AG04449 (cell line): ENCODE measurements at regions of chr10 and their contacts with region 1.

Region 1: DNA sequence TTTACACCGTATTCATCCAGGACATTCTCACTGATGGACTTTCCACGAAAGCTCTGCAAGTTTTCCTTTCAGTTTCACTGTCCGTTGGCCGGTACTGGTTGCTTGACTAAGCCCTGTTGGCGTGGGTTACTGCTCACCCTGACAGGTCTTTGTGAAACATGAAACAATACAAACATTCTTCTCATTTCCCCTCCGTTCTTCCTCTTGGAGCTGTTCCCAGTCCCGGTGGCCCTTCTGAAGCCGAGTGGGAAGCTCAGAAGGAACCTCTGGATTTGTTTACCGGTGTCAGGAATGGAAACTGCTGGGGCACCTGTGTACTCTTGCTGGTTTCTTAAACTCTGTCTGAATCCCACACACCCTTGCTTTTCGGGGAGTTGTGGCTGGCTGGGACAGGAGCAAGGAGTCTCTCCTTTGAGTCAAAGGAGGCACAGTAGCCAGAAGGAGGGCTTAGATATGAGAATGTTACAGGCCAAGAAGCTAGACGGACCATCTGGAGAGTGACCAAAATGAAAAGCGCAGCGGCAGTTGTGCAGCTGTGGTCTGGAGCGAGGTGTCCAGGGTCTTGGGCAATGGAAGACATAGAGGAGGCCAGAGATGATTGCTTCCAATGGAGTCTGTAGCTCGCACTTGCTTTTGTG is 45.7 kb downstream of the LYZL2 start:
- DNase-seq: no peak
- H3K4me3 ChIP-seq: peak overlapping the region; percentile 40
- CTCF ChIP-seq: no peak

Region 2: GRCh38 chr10:30349967-30350735 is 233.7 kb before region 1 on chr10:
- CTCF ChIA-PET with region 1: no interaction called
- POLR2A ChIA-PET with region 1: no interaction called
- DNase-seq: no peak
- H3K4me3 ChIP-seq: no peak overlapping the region
- CTCF ChIP-seq: no peak

Region 3: DNA sequence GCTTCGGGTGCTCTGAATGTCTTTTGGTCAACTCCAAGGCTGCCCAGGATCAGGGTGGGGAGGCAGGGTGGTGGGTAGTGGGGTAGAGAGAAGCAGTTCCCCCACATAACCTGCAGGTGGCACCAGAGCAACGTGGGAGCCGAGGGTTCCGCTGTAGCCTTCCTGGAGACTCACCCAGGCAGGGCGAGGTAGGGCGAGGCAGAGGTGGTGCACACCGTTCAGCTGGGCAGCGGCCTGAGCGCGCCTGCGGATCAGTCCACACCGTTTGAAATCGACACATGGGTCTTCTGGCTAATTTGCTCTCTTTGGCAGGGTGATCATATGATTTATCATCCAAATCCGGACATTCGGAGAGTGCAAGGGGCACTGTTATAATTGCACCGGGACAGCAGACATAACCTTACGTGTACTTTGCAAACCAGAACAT is 191.3 kb before region 1 on chr10:
- CTCF ChIA-PET with region 1: interaction called, 222 read pairs
- POLR2A ChIA-PET with region 1: interaction called, 3 read pairs
- DNase-seq: no peak
- H3K4me3 ChIP-seq: no peak overlapping the region
- CTCF ChIP-seq: peak; percentile 95

Region 4: GRCh38 chr10:30413996-30414576 is 169.8 kb before region 1 on chr10:
- CTCF ChIA-PET with region 1: interaction called, 20 read pairs
- POLR2A ChIA-PET with region 1: no interaction called
- DNase-seq: no peak
- H3K4me3 ChIP-seq: no peak overlapping the region
- CTCF ChIP-seq: peak; percentile 76

Region 5: GRCh38 chr10:30437031-30437841 is 146.7 kb before region 1 on chr10:
- CTCF ChIA-PET with region 1: no interaction called
- POLR2A ChIA-PET with region 1: no interaction called
- DNase-seq: no peak
- H3K4me3 ChIP-seq: peak overlapping the region; percentile 86
- CTCF ChIP-seq: no peak

Region 6: DNA sequence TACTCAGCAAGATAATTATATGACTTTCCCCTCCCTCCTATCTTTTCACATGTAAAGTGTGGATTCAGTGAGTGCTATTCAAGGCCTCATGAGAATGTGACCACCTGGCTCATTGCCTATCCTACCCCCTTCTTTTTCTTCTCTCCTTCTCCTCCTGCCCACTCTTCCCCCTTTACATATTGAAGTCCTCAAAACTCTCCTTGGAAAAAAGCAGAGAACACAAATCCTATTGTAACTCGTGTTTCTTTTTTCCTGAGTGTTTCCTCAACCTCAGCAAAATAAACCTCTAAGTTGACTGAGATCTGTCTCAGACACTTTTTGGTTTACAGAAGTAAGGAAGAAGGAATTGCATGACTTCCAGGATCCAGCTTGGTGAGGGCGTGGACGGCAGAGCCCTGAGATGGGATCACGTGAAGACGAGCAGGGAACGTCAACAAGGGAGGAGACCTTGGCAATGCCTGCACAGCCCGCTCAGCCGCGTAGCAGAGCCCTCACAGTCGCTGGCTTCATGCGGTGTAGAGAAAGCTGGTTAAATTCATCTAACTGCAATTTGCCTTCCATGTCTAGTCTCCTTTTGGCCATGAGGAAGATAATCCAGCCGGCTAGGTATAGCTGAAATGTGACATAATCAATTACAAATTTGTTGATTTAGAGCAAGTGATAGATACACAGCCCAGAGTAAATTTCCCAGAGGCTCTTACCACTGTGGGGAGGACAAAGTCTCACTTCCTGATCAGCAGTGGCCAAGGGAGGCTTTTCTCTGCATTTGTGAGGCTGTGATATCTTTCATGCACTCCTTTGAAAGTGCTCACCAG is 30.1 kb before region 1 on chr10:
- CTCF ChIA-PET with region 1: interaction called, 13 read pairs
- POLR2A ChIA-PET with region 1: no interaction called
- DNase-seq: no peak
- H3K4me3 ChIP-seq: no peak overlapping the region
- CTCF ChIP-seq: no peak

Region 7: DNA sequence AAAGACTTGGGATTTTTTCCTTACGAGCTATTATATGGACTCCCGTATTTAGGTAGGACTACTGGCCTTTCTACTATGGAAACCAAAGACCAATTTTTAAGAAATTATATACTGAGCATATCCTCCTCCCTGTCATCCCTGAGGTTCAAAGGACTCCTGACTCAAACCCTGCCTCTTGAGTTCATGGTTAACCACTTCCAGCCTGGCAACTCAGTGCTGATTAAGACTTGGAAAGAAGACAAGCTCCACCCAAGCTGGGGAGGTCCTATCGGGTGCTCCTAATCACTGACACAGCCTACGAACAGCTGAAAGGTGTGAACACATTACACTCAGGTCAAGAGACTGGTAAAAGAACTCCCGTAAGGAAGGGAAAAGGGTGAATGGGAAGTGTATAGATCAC is 21.1 kb before region 1 on chr10:
- CTCF ChIA-PET with region 1: interaction called, 52 read pairs
- POLR2A ChIA-PET with region 1: no interaction called
- DNase-seq: no peak
- H3K4me3 ChIP-seq: no peak overlapping the region
- CTCF ChIP-seq: no peak